ENCODE measurements at regions of chr12 and their contacts with region 1.

Region 1: GRCh38 chr12:56359851-56360767 is at the start of gene STAT2:
- DNase-seq: peak; percentile 99
- ATAC-seq: peak; percentile 98 to 99
- total RNA-seq, gene STAT2: 52.2 to 68.1 TPM

Region 2: DNA sequence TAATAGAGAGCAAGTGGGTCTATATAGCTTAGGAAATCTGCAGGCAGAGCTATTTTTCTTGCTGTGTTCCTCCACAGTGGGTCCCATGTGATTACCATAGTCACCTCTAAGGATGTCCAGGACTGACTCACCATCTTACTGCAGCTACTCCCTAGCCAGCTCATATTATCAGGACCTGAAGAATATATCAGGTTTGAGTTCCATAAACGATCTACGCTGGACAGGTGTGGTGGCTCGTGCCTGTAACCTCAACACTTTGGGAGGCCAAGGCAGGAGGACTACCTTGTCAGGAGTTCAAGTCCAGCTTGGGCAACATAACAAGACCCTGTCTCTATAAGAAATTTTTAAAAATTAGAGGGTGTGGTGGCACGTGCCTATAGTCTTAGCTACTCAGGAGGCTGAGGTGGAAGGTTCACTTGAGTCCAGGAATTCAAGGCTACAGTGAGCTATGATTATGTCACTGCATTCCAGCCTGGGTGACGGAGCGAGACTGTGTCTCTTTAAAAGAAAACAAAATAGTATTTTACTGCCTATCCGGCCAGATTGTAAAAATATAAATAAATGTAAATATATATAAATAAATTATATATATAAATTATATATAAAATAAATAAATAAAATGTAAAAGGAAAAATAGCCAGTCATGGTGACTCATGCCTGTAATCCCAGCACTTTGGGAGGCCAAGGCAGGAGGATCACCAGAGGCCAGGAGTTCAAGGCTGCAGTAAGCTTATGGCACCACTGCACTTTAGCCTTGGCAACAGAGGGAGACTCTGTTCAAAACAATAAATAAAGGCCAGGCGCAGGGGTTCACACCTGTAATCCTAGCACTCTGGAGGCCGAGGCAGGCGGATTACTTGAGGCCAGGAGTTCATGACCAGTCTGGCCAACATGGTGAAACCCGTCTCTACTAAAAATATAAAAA is 101.4 kb after region 1 on chr12:
- intact Hi-C with region 1: loop called in 1 of 2 experiments (anchors 5 kb)
- DNase-seq: no peak
- ATAC-seq: no peak